Dorsolateral prefrontal cortex (tissue), 120 donors: ENCODE measurements at regions of chr9 and their contacts with region 1.

Region 1: DNA sequence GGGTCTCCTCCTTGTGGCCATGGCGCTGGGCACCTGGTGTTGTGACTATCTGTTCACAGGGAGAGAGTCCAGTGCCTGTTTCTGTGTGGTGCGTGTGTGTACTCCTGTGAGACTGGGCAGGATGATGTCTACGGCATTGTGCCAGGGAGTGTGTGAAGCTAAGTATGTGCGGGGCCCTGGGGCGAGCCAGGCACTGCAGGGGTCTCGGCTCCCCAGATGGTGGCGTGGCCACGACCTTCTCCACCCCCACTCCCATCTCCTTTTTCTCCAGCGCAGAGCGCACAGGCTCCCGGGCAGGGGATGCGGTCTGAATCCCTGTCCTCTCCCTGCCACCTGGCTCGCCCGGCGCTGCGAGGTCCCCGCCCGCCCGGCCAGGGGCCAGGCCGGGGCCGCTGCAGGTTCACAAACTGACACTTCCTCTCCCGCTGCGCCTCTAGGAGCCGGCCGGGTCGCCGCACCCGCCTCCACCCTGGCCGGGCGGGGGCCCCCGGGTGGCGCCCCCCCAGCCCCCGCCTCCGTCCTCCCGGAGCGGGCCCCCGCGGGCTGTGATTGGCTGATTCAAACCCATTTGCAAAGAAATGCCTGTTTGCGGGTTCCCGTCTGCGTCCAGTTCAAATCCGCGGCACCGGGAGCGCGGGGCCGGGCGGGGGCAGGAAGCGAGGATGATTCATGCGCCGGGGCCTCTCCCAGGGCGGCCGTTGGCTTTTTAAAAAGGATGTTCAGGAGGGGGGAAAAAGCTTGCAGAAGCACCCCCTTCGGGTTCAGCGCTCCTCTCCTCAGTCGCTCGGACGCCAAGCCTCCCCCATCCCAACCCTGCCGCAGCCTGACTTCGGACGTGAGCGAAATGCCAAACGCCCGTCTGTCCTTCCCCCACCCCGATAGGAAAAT is 790 bp downstream of the PHF19 start:
- DNase-seq: peak; percentile 74 to 90 (median 84)
- H3K4me3 ChIP-seq: peak overlapping the region; percentile 40 to 86 (median 75)
- H3K27ac ChIP-seq: peak overlapping the region; percentile 80 to 99 (median 95)
- H3K27me3 ChIP-seq: no peaks in the 10 kb centered on the region
- CTCF ChIP-seq: peak in 14 of 56 donors; percentile 6 to 51 (median 19)

Region 2: GRCh38 chr9:120792898-120793765 is 83.1 kb before region 1 on chr9 and contains the start of gene FBXW2:
- intact Hi-C with region 1: loop called in 1 of 2 experiments (anchors 5 kb)
- DNase-seq: peak; percentile 82 to 96 (median 90)
- H3K4me3 ChIP-seq: peak within 1 kb of the TSS; percentile 72 to 100 (median 95)
- H3K27ac ChIP-seq: peak within 1 kb of the TSS; percentile 7 to 97 (median 84)
- H3K27me3 ChIP-seq: no peaks in the 10 kb centered on the region
- CTCF ChIP-seq: peak in 43 of 56 donors; percentile 4 to 62 (median 31)
- total RNA-seq, gene FBXW2: 37.6 to 68.5 (median 52.8) TPM

Region 3: GRCh38 chr9:120913647-120914264 is 37.6 kb after region 1 on chr9:
- intact Hi-C with region 1: loop called in 1 of 2 experiments (anchors 2 kb)
- DNase-seq: peak in 1 of 10 donors; percentile 48
- H3K4me3 ChIP-seq: peak overlapping the region in 17 of 59 donors; percentile 1 to 38 (median 15)
- H3K27ac ChIP-seq: peak overlapping the region in 58 of 59 donors; percentile 76 to 99 (median 95)
- H3K27me3 ChIP-seq: no peaks in the 10 kb centered on the region
- CTCF ChIP-seq: no peak

Region 4: DNA sequence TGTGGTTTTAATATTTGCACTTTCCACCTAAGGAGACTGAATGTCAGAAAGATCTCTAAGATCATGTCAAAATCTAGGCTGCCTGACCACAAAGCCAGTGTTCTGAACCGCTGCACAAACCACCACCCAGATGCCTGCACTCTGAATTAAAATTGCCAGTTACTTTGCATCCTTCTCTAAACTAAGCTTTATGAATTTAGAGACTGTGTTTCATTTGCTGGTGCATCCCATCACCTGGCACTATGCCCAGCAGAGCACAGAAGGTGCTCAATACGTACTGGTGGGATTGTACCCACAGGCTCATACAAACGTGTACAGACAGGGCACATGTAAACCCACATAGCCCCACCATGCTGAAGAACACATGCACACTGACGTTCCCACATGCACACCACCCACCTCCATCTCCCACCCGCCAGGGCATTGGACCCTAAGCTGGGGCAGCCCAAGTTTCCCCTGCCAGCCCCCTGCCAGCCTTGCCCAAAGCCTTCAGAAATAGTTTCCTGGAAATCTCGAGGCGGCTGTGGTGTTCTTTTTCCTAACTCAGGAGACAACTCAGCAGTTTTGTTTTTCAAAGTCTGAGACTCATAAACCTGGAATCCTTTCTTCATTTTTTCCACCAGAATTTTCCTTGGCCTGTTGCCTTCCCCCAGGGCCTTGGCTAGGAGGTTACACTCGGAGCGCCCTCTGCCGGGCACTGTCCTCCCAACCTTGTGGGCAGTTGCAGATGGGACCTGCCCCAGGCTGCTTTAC is 60.0 kb after region 1 on chr9:
- intact Hi-C with region 1: loop called in 1 of 2 experiments (anchors 2 kb)
- DNase-seq: peak; percentile 87 to 93 (median 90)
- H3K4me3 ChIP-seq: peak overlapping the region in 10 of 59 donors; percentile 0 to 25 (median 14)
- H3K27ac ChIP-seq: peak overlapping the region; percentile 57 to 95 (median 88)
- H3K27me3 ChIP-seq: no peaks in the 10 kb centered on the region
- CTCF ChIP-seq: peak; percentile 72 to 97 (median 92)

Region 5: GRCh38 chr9:121326130-121326838 is 450.1 kb after region 1 on chr9:
- intact Hi-C with region 1: no loop called
- DNase-seq: peak in 1 of 10 donors; percentile 28
- H3K4me3 ChIP-seq: peak overlapping the region in 1 of 59 donors; percentile 19
- H3K27ac ChIP-seq: peak overlapping the region in 55 of 59 donors; percentile 33 to 93 (median 83)
- H3K27me3 ChIP-seq: no peaks in the 10 kb centered on the region
- CTCF ChIP-seq: no peak